ENCODE measurements at regions of chr2 and their contacts with region 1.

Region 1: GRCh38 chr2:183825710-183826109 is 701.5 kb downstream of the NUP35 start:
- DNase-seq: no peak

Region 2: GRCh38 chr2:183179156-183179555 is 646.6 kb before region 1 on chr2:
- intact Hi-C with region 1: no loop called
- DNase-seq: no peak

Region 3: DNA sequence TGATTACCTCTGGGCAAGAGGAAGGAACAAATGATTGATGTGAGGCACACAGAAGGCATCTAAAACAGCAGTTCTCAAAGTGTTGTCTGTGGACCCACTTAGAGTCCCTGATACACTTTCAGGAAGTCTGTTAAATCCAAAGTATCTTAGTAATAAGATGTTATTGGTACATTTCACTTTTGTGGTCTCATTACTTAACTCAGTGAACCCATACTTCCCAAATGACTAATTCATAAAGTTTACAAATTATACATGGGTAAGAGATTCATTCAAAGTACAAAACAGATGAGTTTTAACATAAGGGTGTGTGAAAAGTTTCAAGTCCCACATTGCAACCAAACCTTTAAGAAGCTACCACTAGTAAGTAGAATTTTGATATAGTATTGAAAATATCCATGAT is 261.0 kb before region 1 on chr2:
- intact Hi-C with region 1: no loop called
- DNase-seq: no peak

Region 4: GRCh38 chr2:183678908-183679307 is 146.8 kb before region 1 on chr2:
- intact Hi-C with region 1: no loop called
- DNase-seq: peak in 1 of 10 donors; percentile 13

Region 5: GRCh38 chr2:183838295-183838694 is 12.6 kb after region 1 on chr2:
- intact Hi-C with region 1: loop called (anchors 1 kb)
- DNase-seq: peak in 3 of 10 donors; percentile 48 to 81 (median 57)

Region 6: DNA sequence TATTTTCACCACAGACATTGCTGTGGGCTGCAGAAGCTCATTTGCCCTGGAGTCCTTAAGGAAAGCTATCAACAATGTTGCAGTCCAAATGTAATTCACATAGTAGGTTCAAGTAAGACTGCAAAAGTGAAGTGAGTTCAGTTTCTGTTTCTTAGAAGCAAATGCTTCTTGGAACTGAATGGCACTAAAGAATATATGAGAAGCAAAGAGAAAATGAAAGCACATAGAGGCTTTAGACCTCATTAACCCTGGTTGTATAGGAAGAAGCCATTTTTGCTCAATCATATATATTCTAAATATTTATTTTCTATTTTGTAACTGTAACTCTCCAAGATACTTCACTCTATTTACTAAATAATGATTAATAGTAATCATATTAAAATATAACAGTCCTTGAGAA is 1064.6 kb after region 1 on chr2:
- intact Hi-C with region 1: no loop called
- DNase-seq: no peak